B cell (primary cell): ENCODE measurements at regions of chr6 and their contacts with region 1.

Region 1: GRCh38 chr6:166989427-166990032 is 9.7 kb upstream of the CEP43 start:
- DNase-seq: peak; percentile 74
- ATAC-seq: peak; percentile 86
- H3K4me3 ChIP-seq: no peak overlapping the region
- H3K4me3 Mint-ChIP-seq: no peak overlapping the region
- H3K27ac ChIP-seq: no peak overlapping the region
- H3K27ac Mint-ChIP-seq: peak overlapping the region; percentile 0
- H3K4me1 ChIP-seq: no peaks in the 10 kb centered on the region
- H3K4me1 Mint-ChIP-seq: peaks cover 7% of the 10 kb centered on the region
- H3K27me3 ChIP-seq: no peaks in the 10 kb centered on the region
- H3K27me3 Mint-ChIP-seq: no peaks in the 10 kb centered on the region
- CTCF ChIP-seq: peak; percentile 78

Region 2: DNA sequence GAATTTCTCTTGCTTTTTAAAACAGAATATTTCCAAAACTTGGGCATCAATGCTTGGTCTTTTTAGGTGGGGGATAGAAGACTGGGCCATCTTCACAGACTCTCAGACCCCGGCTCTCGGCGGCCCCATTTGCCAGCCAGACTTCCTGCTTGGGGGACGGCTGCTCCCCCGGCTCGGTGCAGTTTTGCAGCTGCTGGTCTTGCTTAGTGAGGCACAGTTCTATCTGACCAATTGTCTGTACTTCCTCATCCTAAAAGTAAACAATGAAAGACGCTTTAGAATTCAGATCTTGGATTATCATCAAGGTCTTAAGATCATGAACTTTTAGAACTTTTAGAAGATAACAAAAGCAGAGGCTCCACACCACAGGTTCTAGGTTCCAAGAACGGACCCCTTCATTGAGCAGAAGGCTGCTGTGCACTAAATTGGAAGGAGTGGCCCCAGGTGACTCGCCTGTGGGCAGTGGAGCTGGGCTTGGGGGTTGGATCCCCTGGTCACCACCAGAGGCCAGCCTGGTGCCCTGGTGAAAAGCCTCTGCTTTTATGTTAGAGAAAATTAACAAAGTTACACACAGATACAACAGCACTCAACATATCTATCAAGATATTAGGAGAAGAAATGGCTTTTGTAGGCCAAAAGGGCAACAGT is 59.9 kb before region 1 on chr6:
- CTCF ChIA-PET with region 1: interaction called, 38 read pairs
- POLR2A ChIA-PET with region 1: no interaction called
- intact Hi-C with region 1: no loop called
- DNase-seq: peak; percentile 32
- ATAC-seq: peak; percentile 75
- H3K4me3 ChIP-seq: peak overlapping the region in 1 of 5 experiments; percentile 8
- H3K4me3 Mint-ChIP-seq: peak overlapping the region; percentile 55
- H3K27ac ChIP-seq: peak overlapping the region; percentile 39 to 74
- H3K27ac Mint-ChIP-seq: peak overlapping the region; percentile 96
- H3K4me1 ChIP-seq: peaks cover 21 to 29% of the 10 kb centered on the region in 2 donors
- H3K4me1 Mint-ChIP-seq: peaks cover 43% of the 10 kb centered on the region
- H3K27me3 ChIP-seq: no peaks in the 10 kb centered on the region
- H3K27me3 Mint-ChIP-seq: no peaks in the 10 kb centered on the region
- CTCF ChIP-seq: no peak

Region 3: DNA sequence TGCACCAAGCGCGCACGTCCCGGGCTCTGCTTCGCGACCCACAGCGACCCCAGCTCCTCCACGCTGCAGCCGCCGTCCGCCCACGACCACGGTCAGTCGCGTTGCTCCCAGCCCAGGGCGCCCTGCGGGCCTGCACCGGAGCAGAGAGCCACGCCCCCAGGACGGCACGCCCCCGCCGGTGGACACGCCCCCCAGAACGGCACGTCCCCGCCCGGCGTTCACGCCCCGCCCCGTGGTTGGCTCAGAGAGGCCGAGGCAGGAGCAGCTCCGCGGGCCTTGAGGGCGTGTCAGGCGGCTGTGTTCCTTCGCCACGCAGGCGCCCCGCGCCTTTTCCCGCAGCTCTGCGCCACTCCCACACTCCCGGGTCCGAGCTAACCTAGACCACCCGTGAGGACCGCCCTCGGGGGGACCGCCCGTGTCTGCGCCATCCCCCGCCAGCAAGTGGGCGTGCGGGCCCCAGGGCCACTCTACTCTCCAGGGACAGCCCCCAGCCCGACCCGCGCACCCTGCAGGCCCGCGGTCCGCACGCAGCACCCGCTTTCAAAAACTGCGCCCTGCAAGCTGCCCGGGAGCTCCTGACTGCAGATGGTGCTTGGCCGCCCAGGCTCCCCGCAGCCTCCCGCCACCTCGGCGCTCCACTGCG is 33.0 kb before region 1 on chr6 and contains the start of gene RNASET2:
- CTCF ChIA-PET with region 1: interaction called, 117 read pairs
- POLR2A ChIA-PET with region 1: interaction called, 9 read pairs
- intact Hi-C with region 1: loop called (anchors 1 kb)
- DNase-seq: peak; percentile 96
- ATAC-seq: peak; percentile 85
- H3K4me3 ChIP-seq: peak within 1 kb of the TSS; percentile 79 to 97 (median 89)
- H3K4me3 Mint-ChIP-seq: peak within 1 kb of the TSS; percentile 93
- H3K27ac ChIP-seq: peak within 1 kb of the TSS; percentile 94 to 98
- H3K27ac Mint-ChIP-seq: peak within 1 kb of the TSS; percentile 100
- H3K4me1 ChIP-seq: peaks cover 65 to 78% of the 10 kb centered on the region in 2 donors
- H3K4me1 Mint-ChIP-seq: peaks cover 73% of the 10 kb centered on the region
- H3K27me3 ChIP-seq: no peaks in the 10 kb centered on the region
- H3K27me3 Mint-ChIP-seq: no peaks in the 10 kb centered on the region
- CTCF ChIP-seq: no peak
- total RNA-seq, gene RNASET2: 293 and 302 TPM in 2 replicates

Region 4: DNA sequence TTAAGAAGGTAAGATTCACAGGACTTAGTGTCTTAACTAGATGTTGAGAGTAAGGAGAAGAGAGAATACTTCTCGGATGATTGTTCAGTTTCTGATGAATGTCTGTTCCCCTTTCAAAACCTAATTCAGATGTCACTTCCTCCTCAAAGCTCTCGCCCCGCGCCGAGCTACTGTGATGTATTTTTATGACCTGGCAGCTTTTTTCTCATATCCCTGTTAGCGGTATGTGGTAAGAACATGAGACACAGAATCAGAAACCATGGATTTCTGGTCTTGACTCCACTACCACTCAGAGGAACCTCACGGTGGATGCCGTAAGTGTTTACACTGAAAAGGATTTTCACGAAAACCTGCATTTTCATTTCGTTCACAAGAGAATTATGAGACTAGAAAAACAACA is 58.0 kb after region 1 on chr6:
- CTCF ChIA-PET with region 1: interaction called, 11 read pairs
- POLR2A ChIA-PET with region 1: no interaction called
- intact Hi-C with region 1: no loop called
- DNase-seq: peak; percentile 86
- ATAC-seq: peak; percentile 81
- H3K4me3 ChIP-seq: peak overlapping the region in 4 of 5 experiments; percentile 31 to 57 (median 44)
- H3K4me3 Mint-ChIP-seq: peak overlapping the region; percentile 57
- H3K27ac ChIP-seq: peak overlapping the region; percentile 70 to 88
- H3K27ac Mint-ChIP-seq: peak overlapping the region; percentile 79
- H3K4me1 ChIP-seq: peaks cover 36 to 47% of the 10 kb centered on the region in 2 donors
- H3K4me1 Mint-ChIP-seq: peaks cover 55% of the 10 kb centered on the region
- H3K27me3 ChIP-seq: no peaks in the 10 kb centered on the region
- H3K27me3 Mint-ChIP-seq: no peaks in the 10 kb centered on the region
- CTCF ChIP-seq: no peak

Region 5: DNA sequence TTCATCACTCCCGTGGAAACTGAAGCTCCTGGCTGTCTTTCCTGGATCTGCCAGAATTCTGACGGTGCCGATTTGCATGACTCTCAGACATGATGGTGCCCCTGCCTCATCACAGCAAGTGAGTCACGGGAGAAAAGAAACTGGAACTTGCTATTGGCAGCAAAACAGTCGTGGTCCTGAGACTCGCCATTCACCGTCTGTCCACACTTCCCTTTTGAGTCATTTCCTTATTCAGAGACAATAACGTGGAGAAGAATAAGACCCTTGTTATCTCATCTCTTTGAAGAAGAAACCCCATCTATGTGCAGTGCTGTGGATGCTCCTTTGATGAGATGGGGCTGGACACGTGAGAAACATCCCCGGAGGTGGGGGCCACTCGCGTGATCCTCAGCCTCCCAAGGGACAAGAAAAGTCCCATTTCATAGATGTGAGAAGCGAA is 164.0 kb after region 1 on chr6:
- CTCF ChIA-PET with region 1: interaction called, 11 read pairs
- POLR2A ChIA-PET with region 1: no interaction called
- intact Hi-C with region 1: no loop called
- DNase-seq: peak; percentile 77
- ATAC-seq: peak; percentile 65
- H3K4me3 ChIP-seq: peak overlapping the region in 4 of 5 experiments; percentile 15 to 52 (median 37)
- H3K4me3 Mint-ChIP-seq: peak overlapping the region; percentile 86
- H3K27ac ChIP-seq: peak overlapping the region; percentile 72 to 83
- H3K27ac Mint-ChIP-seq: peak overlapping the region; percentile 89
- H3K4me1 ChIP-seq: peaks cover 44 to 55% of the 10 kb centered on the region in 2 donors
- H3K4me1 Mint-ChIP-seq: peaks cover 60% of the 10 kb centered on the region
- H3K27me3 ChIP-seq: no peaks in the 10 kb centered on the region
- H3K27me3 Mint-ChIP-seq: no peaks in the 10 kb centered on the region
- CTCF ChIP-seq: no peak

Region 6: GRCh38 chr6:167501781-167502385 is 512.4 kb after region 1 on chr6:
- CTCF ChIA-PET with region 1: no interaction called
- POLR2A ChIA-PET with region 1: no interaction called
- intact Hi-C with region 1: no loop called
- DNase-seq: no peak
- ATAC-seq: no peak
- H3K4me3 ChIP-seq: no peak overlapping the region
- H3K4me3 Mint-ChIP-seq: no peak overlapping the region
- H3K27ac ChIP-seq: no peak overlapping the region
- H3K27ac Mint-ChIP-seq: no peak overlapping the region
- H3K4me1 ChIP-seq: no peaks in the 10 kb centered on the region
- H3K4me1 Mint-ChIP-seq: no peaks in the 10 kb centered on the region
- H3K27me3 ChIP-seq: peaks cover 0 to 2% (median 0%) of the 10 kb centered on the region in 4 experiments
- H3K27me3 Mint-ChIP-seq: peaks cover 8% of the 10 kb centered on the region
- CTCF ChIP-seq: no peak

Region 7: DNA sequence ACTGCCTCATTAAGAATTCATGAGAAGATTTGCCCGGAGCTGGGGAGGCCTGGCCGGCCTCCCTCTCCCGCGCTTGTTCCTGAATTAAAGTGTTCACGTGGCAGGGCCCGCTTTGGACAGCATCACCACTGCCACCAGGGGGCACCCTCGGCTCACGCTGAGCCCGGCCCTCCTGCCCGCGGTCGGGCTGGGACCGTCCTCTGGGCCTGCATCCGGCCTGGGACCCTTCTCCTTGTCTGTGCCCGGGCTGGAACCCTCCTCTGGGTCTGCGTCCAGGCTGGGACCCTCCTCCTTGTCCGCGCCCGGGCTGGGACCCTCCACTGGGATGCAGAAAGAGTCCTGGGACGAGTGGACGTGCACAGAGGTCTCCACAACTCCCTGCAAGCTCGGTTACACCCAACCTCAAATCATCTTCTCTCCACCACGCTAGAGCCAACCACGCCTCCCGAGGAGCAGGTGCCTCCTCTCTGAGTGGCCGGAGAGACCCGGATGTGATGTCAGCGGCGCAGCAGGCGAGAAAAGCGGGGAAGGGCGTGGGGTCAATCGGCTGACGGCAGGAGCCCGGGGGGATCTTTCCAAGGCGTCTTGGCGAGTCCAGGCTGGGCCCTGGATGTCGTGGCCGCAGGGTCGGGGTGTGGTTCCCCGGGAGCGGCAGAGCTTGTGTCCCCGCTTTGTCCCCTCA is 1380.9 kb after region 1 on chr6:
- CTCF ChIA-PET with region 1: no interaction called
- POLR2A ChIA-PET with region 1: no interaction called
- intact Hi-C with region 1: no loop called
- DNase-seq: peak; percentile 27
- ATAC-seq: no peak
- H3K4me3 ChIP-seq: no peak overlapping the region
- H3K4me3 Mint-ChIP-seq: no peak overlapping the region
- H3K27ac ChIP-seq: no peak overlapping the region
- H3K27ac Mint-ChIP-seq: no peak overlapping the region
- H3K4me1 ChIP-seq: no peaks in the 10 kb centered on the region
- H3K4me1 Mint-ChIP-seq: peaks cover 2% of the 10 kb centered on the region
- H3K27me3 ChIP-seq: no peaks in the 10 kb centered on the region
- H3K27me3 Mint-ChIP-seq: peaks cover 3% of the 10 kb centered on the region
- CTCF ChIP-seq: peak; percentile 56